Activated CD4-positive, alpha-beta T cell treated with anti-CD3 and anti-CD28 coated beads, Interleukin-2, amount 10 ng/mL, durations not matched to agents 24 days and 14 days (primary cell): ENCODE measurements at regions of chr17 and their contacts with region 1.

Region 1: GRCh38 chr17:80855948-80856862 is 135.4 kb upstream of the CHMP6 start:
- DNase-seq: peak; percentile 95
- H3K4me3 Mint-ChIP-seq: peak overlapping the region; percentile 62
- H3K27ac Mint-ChIP-seq: peak overlapping the region; percentile 91
- H3K4me1 Mint-ChIP-seq: peaks cover 73% of the 10 kb centered on the region
- H3K27me3 Mint-ChIP-seq: no peaks in the 10 kb centered on the region

Region 2: GRCh38 chr17:80866147-80866793 is 10.1 kb after region 1 on chr17:
- intact Hi-C with region 1: loop called (anchors 1 kb)
- DNase-seq: peak; percentile 93
- H3K4me3 Mint-ChIP-seq: peak overlapping the region; percentile 16
- H3K27ac Mint-ChIP-seq: peak overlapping the region; percentile 74
- H3K4me1 Mint-ChIP-seq: peaks cover 74% of the 10 kb centered on the region
- H3K27me3 Mint-ChIP-seq: no peaks in the 10 kb centered on the region

Region 3: DNA sequence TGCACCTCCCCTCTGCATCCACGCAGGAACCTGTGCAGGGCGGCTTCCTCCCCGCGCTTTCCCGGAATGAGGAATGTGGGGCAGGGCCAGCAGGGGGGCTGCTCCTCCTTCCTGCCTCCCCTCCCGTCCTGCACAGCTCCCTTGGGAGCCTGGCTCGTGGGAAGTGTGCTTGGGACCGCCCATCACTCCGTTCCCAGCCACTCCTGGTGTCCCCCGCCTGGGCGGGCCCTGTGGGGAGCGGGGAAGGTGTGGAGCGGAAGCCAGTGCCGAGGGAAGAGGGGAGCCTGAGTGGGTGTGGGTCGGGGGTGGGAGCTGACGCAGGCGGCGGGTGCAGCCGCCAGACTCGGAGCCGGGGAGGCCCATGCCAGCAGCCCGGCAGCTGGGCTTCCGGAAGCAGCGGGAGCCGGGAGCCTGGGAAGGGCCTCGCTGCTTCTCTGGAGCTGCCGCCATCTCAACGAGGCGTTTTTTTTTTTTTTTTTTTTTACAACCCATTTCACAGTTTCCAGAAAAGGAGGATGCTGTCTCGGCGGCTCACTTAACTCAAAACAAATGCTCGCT is 563.2 kb after region 1 on chr17:
- intact Hi-C with region 1: no loop called
- DNase-seq: no peak
- H3K4me3 Mint-ChIP-seq: no peak overlapping the region
- H3K27ac Mint-ChIP-seq: no peak overlapping the region
- H3K4me1 Mint-ChIP-seq: no peaks in the 10 kb centered on the region
- H3K27me3 Mint-ChIP-seq: no peaks in the 10 kb centered on the region